ENCODE measurements at regions of chr16 and their contacts with region 1.

Region 1: DNA sequence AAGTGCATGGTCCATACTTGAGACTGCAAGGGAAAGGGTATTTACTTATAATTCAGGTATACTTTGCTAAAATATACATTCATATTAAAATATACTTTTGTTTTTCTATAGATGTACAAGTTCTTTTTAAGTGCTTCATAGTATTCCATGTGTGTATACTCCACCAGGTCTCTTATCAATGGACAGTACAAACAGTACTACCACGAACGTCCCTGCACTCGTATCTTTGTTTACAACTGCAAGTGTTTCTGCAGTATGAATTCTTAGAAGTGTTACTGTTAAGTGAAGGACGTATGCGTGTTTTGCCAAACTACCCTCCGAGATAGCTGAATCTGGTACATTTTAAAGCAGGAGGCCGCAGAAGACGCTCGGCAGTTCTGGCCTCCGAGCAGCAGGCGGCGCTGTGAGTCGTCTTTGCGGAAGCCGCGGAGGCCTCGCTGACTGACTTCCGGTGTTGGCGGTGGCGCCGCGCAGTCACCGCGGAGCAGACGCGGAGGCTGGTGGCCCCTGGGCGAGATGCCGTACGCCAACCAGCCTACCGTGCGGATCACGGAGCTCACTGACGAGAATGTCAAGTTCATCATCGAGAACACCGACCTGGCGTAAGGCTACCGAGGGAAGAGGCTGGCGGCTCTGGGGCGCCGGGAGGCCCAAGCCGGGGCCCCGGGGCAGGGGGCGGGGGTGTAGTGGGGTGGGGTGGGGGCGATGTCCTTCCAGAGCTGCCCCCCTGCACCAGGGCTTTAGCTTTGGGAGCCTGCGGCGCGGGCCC is at the start of gene POLR2C:
- H3K4me3 ChIP-seq: peak within 1 kb of the TSS; percentile 83
- H3K27ac ChIP-seq: peak within 1 kb of the TSS; percentile 45
- H3K4me1 ChIP-seq: no peaks in the 10 kb centered on the region; the same call in 1 of the 2 replicates
- CTCF ChIP-seq: peak; percentile 97

Region 2: GRCh38 chr16:57447186-57447962 is 15.0 kb before region 1 on chr16 and contains the starts of genes CIAPIN1 and COQ9:
- CTCF ChIA-PET with region 1: interaction called, 14 read pairs
- POLR2A ChIA-PET with region 1: interaction called, 40 read pairs
- H3K4me3 ChIP-seq: peak within 1 kb of the TSS; percentile 95
- H3K27ac ChIP-seq: peak within 1 kb of the TSS; percentile 77
- H3K4me1 ChIP-seq: no peaks in the 10 kb centered on the region
- CTCF ChIP-seq: no peak

Region 3: DNA sequence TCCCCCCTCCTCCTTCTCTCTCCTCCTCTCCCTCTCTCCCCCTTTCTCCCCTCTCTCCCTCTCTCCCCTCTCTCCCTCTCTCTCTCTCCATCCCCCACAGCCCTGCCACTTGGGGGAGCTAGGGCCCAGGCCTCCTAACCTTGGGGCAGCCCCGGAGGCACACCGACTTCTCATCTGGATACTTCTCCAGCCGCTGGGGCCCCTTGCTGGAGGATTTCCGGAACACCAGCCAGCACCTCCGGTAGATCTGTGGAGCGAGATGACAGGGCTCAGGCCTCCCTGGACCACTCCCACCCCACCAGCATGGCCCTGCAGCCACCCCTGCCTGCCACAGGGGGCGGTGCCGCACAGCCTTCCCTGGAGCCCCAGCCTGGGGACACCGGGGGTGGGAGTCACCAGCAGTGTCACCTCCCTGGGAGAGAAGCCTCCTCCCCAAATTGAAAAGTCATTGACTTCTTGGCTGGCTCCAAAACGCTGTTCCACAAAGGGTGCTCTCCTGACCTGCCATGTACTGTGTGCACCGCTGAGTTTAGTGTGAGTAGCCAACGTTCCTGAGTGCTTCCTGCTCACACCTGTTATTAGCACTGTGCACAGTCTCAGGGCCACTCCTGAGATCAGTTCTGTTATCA is 13.4 kb after region 1 on chr16:
- CTCF ChIA-PET with region 1: interaction called, 24 read pairs
- POLR2A ChIA-PET with region 1: interaction called, 16 read pairs
- H3K4me3 ChIP-seq: no peak overlapping the region
- H3K27ac ChIP-seq: no peak overlapping the region
- H3K4me1 ChIP-seq: no peaks in the 10 kb centered on the region
- CTCF ChIP-seq: peak; percentile 92

Region 4: DNA sequence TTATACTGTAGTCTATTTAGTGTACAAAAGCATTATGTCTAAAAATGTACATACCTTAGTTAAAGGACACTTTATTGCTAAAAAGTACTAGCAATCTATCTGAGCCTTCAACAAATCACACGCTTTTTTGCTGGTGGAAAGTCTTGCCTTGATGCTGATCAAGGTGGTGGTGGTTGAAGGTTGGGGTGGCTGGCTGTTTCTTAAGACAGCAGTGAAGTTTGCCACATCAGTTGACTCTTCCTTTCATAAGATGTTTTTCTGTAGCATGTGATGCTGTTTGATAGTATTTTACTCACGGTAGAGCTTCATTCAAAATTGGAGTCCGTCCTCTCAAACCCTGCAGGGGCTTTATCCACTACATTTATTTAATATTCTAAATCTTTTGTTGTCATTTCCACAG is 88.7 kb after region 1 on chr16:
- CTCF ChIA-PET with region 1: no interaction called
- POLR2A ChIA-PET with region 1: no interaction called
- H3K4me3 ChIP-seq: no peak overlapping the region
- H3K27ac ChIP-seq: no peak overlapping the region
- H3K4me1 ChIP-seq: no peaks in the 10 kb centered on the region
- CTCF ChIP-seq: no peak

Measured in HEK293 (cell line).